CD8-positive, alpha-beta T cell (primary cell): ENCODE measurements at regions of chr1 and their contacts with region 1.

Region 1: DNA sequence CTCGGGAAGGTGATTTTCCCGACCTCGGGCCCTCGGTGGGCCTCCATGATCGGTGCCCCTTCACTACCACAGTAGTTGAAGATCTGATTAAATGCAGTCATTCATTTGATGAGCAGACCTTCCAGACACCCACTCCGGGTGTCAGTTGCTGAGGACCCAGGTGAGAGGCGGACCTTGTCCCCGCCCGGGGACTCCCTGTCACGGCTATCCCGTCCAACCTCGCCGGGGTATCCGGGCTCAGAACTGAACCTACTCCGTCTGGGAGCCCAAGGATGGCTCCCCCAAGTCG is 22.6 kb downstream of the RNU1-3 start:
- DNase-seq: no peak
- ATAC-seq: peak; percentile 38
- H3K4me3 ChIP-seq: peak overlapping the region; percentile 71 to 90
- H3K4me3 Mint-ChIP-seq: no peak overlapping the region
- H3K27ac ChIP-seq: peak overlapping the region; percentile 77 to 86
- H3K27ac Mint-ChIP-seq: no peak overlapping the region
- H3K4me1 ChIP-seq: peaks cover 38% of the 10 kb centered on the region
- H3K4me1 Mint-ChIP-seq: peaks cover 8% of the 10 kb centered on the region
- H3K27me3 ChIP-seq: no peaks in the 10 kb centered on the region
- H3K27me3 Mint-ChIP-seq: no peaks in the 10 kb centered on the region
- CTCF ChIP-seq: no peak

Region 2: DNA sequence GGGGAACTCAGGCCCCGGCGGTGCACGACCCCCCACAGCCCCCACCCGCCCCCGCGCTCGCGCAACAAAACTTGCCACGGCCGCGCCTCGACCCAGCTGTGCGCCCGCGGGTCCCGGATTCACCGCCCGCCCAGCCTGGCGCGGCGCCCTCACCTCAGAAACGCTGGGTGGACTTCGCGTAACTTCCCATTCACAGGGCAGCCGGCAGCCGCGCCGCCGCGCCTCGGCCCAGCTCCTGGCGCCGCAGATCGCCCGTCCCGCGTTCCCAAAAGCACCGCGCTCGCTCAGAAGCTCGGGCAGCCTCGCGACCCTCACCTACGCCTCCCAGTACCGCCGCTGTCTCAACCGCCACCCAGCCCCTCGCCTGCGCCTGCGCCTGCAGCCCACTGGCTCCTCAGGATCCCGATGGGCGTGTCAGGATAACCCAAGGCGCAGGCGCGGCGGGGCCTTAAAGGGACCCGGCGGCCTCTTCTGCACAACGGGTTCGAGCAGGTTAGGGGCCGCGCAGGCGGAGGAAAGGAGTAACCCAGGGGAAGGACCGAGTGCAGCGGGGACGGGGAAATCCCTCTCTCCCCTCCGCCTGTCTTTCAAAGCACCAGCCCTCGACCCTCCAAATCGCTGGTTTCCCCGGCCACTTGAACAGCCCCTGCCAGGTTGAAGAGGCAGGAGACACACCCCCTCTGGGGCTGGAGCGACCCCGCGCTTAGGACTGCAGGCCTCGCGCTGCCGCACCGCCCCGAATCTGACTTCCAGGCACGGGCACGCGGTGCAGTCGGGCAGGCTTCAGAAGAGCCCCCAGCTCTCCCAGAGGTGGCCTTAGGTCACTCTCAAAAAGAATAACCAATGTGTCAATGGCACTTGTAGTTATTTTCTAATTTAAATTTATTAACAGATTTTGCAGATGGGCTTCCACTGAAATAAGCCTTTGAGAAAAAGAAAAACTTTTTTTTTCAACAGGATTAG is 30.7 kb before region 1 on chr1 and contains the start of gene NBPF1:
- CTCF ChIA-PET with region 1: no interaction called
- POLR2A ChIA-PET with region 1: interaction called, 3 read pairs
- intact Hi-C with region 1: loop called in 1 of 2 experiments (anchors 2 kb)
- DNase-seq: peak; percentile 66 to 95 (median 93)
- ATAC-seq: peak; percentile 94
- H3K4me3 ChIP-seq: peak within 1 kb of the TSS; percentile 61 to 68
- H3K4me3 Mint-ChIP-seq: no peak within 1 kb of the TSS
- H3K27ac ChIP-seq: peak within 1 kb of the TSS; percentile 21 to 42
- H3K27ac Mint-ChIP-seq: no peak within 1 kb of the TSS
- H3K4me1 ChIP-seq: peaks cover 18% of the 10 kb centered on the region
- H3K4me1 Mint-ChIP-seq: no peaks in the 10 kb centered on the region
- H3K27me3 ChIP-seq: no peaks in the 10 kb centered on the region
- H3K27me3 Mint-ChIP-seq: no peaks in the 10 kb centered on the region
- CTCF ChIP-seq: no peak
- total RNA-seq, gene NBPF1: 5.4 to 7.0 TPM